ENCODE measurements at regions of chr4 and their contacts with region 1.

Region 1: GRCh38 chr4:185471235-185472102 is at the start of gene CCDC110:
- DNase-seq: peak; percentile 92
- ATAC-seq: peak; percentile 97
- H3K4me3 ChIP-seq: peak within 1 kb of the TSS; percentile 89
- H3K27ac ChIP-seq: peak within 1 kb of the TSS; percentile 16; the same call in 1 of the 2 replicates
- H3K4me1 ChIP-seq: peaks cover 3% of the 10 kb centered on the region; the same call in 1 of the 2 replicates
- H3K27me3 ChIP-seq: no peaks in the 10 kb centered on the region
- CTCF ChIP-seq: peak; percentile 75
- POLR2A ChIP-seq: no peak
- RAD21 ChIP-seq: peak; percentile 66
- total RNA-seq, gene CCDC110: 0.90 and 1.4 TPM in 2 replicates

Region 2: GRCh38 chr4:185203486-185204237 is 267.8 kb before region 1 on chr4 and contains the start of gene CFAP97:
- CTCF ChIA-PET with region 1: no interaction called
- POLR2A ChIA-PET with region 1: no interaction called
- dilution Hi-C with region 1: no loop called
- in situ Hi-C with region 1: no loop called
- intact Hi-C with region 1: loop called (anchors 2 kb)
- DNase-seq: peak; percentile 87
- ATAC-seq: peak; percentile 95
- H3K4me3 ChIP-seq: peak within 1 kb of the TSS; percentile 62
- H3K27ac ChIP-seq: peak within 1 kb of the TSS; percentile 22
- H3K4me1 ChIP-seq: peaks cover 5% of the 10 kb centered on the region
- H3K27me3 ChIP-seq: no peaks in the 10 kb centered on the region
- CTCF ChIP-seq: no peak
- POLR2A ChIP-seq: peak; percentile 80
- RAD21 ChIP-seq: no peak
- total RNA-seq, gene CFAP97: 16.0 and 33.9 TPM in 2 replicates

Region 3: GRCh38 chr4:185425647-185426352 is 45.7 kb before region 1 on chr4 and contains the start of gene UFSP2:
- CTCF ChIA-PET with region 1: no interaction called
- POLR2A ChIA-PET with region 1: no interaction called
- dilution Hi-C with region 1: no loop called
- in situ Hi-C with region 1: no loop called
- intact Hi-C with region 1: loop called (anchors 2 kb)
- DNase-seq: peak; percentile 88
- ATAC-seq: peak; percentile 93
- H3K4me3 ChIP-seq: peak within 1 kb of the TSS; percentile 63
- H3K27ac ChIP-seq: peak within 1 kb of the TSS; percentile 96
- H3K4me1 ChIP-seq: peaks cover 5% of the 10 kb centered on the region; the same call in 1 of the 2 replicates
- H3K27me3 ChIP-seq: no peaks in the 10 kb centered on the region
- CTCF ChIP-seq: no peak
- POLR2A ChIP-seq: peak; percentile 72; the same call in 1 of the 2 replicates
- RAD21 ChIP-seq: peak; percentile 7; the same call in 1 of the 2 replicates
- total RNA-seq, gene UFSP2: 43.7 and 43.9 TPM in 2 replicates

Region 4: DNA sequence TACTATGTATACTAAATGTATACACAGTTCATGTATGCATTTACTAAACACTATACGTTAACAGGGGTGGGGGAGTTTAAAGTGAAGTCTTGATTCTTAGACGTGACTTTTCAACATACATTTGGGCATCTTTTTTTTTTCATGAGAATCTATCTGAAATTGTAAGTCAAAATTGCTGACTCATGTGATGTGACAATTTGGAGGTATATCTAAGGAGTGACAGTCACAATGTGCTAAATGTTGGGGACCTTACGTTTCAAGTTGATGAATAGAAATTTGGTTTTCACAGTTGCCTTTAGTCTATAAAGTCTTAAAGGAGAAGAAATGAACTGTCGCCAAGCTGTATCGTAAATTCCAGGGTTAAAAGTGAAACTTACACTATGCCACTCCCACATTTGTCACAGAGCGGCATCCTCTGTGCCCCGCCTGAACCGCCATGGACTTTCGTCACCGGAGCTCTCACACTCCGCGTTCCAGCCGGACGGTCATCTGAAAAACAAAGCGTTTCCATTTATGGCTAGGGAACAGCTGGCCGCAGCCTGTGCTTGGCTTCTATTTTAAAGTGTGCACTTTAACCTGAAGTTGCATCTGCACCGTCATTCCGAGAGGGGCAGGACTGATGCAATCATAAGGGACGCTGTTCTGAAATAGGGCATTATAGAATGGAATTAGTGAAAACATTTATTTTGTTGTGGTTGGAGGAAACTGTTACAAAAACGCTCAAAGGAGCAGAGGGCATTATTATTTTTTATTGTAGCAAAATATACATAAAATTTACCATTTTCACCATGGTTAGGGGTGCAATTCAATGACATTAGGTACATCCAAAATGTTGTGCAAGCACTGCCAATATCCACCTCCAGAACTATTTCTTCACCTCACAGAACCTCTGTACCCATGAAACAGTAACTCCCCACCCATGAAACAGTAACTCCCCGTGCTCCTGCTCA is 32.9 kb after region 1 on chr4:
- CTCF ChIA-PET with region 1: interaction called, 3 read pairs
- POLR2A ChIA-PET with region 1: no interaction called
- dilution Hi-C with region 1: no loop called
- in situ Hi-C with region 1: no loop called
- intact Hi-C with region 1: loop called (anchors 2 kb)
- DNase-seq: peak; percentile 75
- ATAC-seq: peak; percentile 93
- H3K4me3 ChIP-seq: peak overlapping the region; percentile 41
- H3K27ac ChIP-seq: peak overlapping the region; percentile 58
- H3K4me1 ChIP-seq: peaks cover 3% of the 10 kb centered on the region; the same call in 1 of the 2 replicates
- H3K27me3 ChIP-seq: no peaks in the 10 kb centered on the region
- CTCF ChIP-seq: 0 out of 2 replicates have a peak, but pooled peaks have one; percentile 1
- POLR2A ChIP-seq: no peak
- RAD21 ChIP-seq: no peak

Region 5: DNA sequence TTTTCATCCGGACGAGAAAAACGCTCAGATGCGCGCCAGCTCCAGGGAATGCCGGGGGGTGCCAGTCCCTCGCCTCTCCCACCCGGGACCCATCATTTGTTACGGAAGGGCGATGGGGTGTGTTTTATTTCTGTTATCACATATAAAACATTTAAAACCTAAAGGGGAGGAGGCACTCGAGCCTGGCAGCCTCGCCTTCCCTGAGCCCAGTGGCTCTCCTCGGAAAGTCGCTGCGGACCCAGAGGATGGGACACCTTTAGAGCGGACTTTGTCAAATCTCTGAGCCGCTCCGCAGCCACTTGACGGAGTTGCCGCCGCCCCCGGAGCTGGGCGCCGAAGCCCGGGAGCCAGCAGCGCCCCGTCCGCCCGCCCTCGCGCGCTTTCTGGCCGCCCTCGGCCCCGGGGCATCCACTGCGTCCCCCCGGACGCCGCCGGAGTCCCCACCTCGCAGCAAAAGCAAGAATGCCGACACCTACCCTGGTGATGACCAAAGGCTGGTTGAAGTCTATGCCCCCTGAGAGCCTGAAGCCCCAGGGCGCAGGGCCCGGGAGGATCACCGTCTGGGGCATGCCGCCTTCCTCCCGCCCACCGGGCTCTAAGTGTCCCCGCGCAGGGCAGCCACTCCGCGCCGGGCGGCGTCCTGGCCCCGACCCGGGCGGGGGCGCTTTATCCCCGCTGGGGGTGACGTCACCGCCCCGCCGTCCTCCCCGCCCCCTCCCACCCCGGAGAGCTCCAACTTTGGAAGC is 63.6 kb after region 1 on chr4 and contains the start of gene PDLIM3:
- CTCF ChIA-PET with region 1: no interaction called
- POLR2A ChIA-PET with region 1: no interaction called
- dilution Hi-C with region 1: no loop called
- in situ Hi-C with region 1: no loop called
- intact Hi-C with region 1: loop called (anchors 5 kb)
- DNase-seq: peak; percentile 30
- ATAC-seq: peak; percentile 83
- H3K4me3 ChIP-seq: peak within 1 kb of the TSS; percentile 96
- H3K27ac ChIP-seq: peak within 1 kb of the TSS; percentile 23
- H3K4me1 ChIP-seq: peaks cover 2% of the 10 kb centered on the region; the same call in 1 of the 2 replicates
- H3K27me3 ChIP-seq: peaks cover 5% of the 10 kb centered on the region
- CTCF ChIP-seq: no peak
- POLR2A ChIP-seq: peak; percentile 74
- RAD21 ChIP-seq: no peak
- total RNA-seq, gene PDLIM3: 8.9 and 11.7 TPM in 2 replicates

Region 6: DNA sequence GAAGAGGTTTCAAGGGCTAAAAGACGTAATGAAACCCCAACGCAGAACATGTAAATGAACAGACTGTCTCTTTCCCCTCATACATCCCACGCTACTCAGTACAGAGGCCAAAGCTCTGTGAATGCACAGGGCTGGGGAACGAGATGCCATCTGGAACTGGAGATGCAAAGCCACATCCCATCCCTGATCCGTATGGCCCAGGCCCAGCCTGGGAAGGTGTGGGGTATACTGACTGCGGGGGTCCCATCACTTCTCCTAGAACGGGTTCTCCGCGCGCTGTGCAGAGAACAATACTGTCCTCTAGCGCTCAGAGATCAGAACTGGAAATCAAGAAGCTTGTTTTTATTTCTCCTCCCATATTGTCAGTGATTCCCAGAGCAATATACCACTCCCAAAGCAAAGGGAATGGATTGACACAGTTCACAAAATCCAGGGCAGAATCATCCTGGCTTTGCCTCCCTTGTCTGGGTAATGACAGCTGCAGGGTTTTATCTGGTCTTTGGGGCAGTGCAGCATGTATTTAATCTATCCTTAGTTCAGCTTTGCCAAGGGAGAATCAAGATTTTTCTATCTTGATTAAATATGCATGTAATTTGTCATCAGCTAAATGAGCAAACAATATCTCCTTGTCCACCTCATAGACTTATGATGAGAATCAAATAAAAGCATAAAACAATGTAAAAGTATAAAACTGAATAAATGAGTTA is 550.1 kb after region 1 on chr4:
- CTCF ChIA-PET with region 1: no interaction called
- POLR2A ChIA-PET with region 1: no interaction called
- dilution Hi-C with region 1: no loop called
- in situ Hi-C with region 1: loop called (anchors 25 kb)
- intact Hi-C with region 1: loop called (anchors 5 kb)
- DNase-seq: peak; percentile 20
- ATAC-seq: peak; percentile 86
- H3K4me3 ChIP-seq: no peak overlapping the region
- H3K27ac ChIP-seq: no peak overlapping the region
- H3K4me1 ChIP-seq: no peaks in the 10 kb centered on the region
- H3K27me3 ChIP-seq: peaks cover 26% of the 10 kb centered on the region
- CTCF ChIP-seq: peak; percentile 83
- POLR2A ChIP-seq: no peak
- RAD21 ChIP-seq: peak; percentile 88

Measured in IMR-90 (cell line).